ENCODE measurements at regions of chr7 and their contacts with region 1.

Region 1: GRCh38 chr7:43314379-43315189 is 202.1 kb downstream of the HECW1 start:
- DNase-seq: no peak
- H3K4me3 Mint-ChIP-seq: no peak overlapping the region
- H3K27ac Mint-ChIP-seq: no peak overlapping the region
- H3K4me1 Mint-ChIP-seq: peaks cover 13% of the 10 kb centered on the region
- H3K27me3 Mint-ChIP-seq: no peaks in the 10 kb centered on the region

Region 2: GRCh38 chr7:43303740-43304241 is 10.8 kb before region 1 on chr7:
- CTCF ChIA-PET with region 1: interaction called, 11 read pairs
- POLR2A ChIA-PET with region 1: interaction called, 3 read pairs
- DNase-seq: no peak
- H3K4me3 Mint-ChIP-seq: no peak overlapping the region
- H3K27ac Mint-ChIP-seq: no peak overlapping the region
- H3K4me1 Mint-ChIP-seq: no peaks in the 10 kb centered on the region
- H3K27me3 Mint-ChIP-seq: peaks cover 7% of the 10 kb centered on the region

Region 3: DNA sequence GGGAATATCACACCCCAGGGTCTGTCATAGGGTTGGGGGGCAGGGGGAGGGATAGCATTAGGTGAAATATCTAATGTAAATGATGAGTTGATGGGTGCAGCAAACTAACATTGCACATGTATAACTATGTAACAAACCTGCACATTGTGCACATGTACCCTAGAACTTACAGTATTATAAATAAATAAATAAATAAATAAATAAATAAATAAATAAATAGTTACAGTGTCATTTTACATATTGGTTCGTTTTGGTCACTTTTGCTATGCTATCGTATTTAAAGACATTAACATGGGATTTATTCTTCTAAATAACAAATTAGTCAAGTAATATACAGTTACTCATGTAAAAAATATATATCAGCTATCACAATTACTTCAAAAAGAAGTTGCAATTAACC is 26.5 kb after region 1 on chr7:
- CTCF ChIA-PET with region 1: no interaction called
- POLR2A ChIA-PET with region 1: no interaction called
- DNase-seq: no peak
- H3K4me3 Mint-ChIP-seq: no peak overlapping the region
- H3K27ac Mint-ChIP-seq: no peak overlapping the region
- H3K4me1 Mint-ChIP-seq: no peaks in the 10 kb centered on the region
- H3K27me3 Mint-ChIP-seq: peaks cover 19% of the 10 kb centered on the region